Esophagus muscularis mucosa (tissue), 4 donors: ENCODE measurements at regions of chr12 and their contacts with region 1.

Region 1: GRCh38 chr12:56758728-56759262 is 4.3 kb upstream of the HSD17B6 start:
- DNase-seq: no peak
- H3K4me3 ChIP-seq: no peak overlapping the region
- H3K27ac ChIP-seq: no peak overlapping the region
- H3K4me1 ChIP-seq: peaks cover 0 to 2% (median 0%) of the 10 kb centered on the region in 4 donors
- H3K27me3 ChIP-seq: no peaks in the 10 kb centered on the region
- CTCF ChIP-seq: no peak
- EP300 ChIP-seq: no peak
- POLR2A ChIP-seq: no peak

Region 2: DNA sequence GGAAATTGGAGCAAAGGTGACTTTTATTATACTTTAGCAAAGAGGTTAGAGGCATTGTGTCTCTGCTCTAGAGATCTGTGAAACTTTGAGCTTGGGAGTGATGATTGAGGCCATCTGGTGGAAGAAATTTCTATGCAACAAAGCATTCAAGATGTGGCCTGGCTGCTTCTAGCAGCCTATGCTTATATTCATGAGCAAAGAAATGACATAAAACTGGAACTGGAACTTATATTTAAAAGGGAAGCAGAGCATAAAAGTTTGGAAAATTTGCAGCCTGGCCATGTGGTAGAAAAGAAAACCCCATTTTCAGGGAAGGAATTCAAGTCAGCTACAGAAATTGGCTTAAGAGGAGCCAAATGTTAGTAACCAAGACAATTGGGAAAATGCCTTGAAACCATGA is 105.0 kb after region 1 on chr12:
- intact Hi-C with region 1: no loop called
- DNase-seq: no peak
- H3K4me3 ChIP-seq: no peak overlapping the region
- H3K27ac ChIP-seq: no peak overlapping the region
- H3K4me1 ChIP-seq: no peaks in the 10 kb centered on the region
- H3K27me3 ChIP-seq: peaks cover 0 to 6% (median 0%) of the 10 kb centered on the region in 4 donors
- CTCF ChIP-seq: no peak
- EP300 ChIP-seq: no peak
- POLR2A ChIP-seq: no peak

Region 3: DNA sequence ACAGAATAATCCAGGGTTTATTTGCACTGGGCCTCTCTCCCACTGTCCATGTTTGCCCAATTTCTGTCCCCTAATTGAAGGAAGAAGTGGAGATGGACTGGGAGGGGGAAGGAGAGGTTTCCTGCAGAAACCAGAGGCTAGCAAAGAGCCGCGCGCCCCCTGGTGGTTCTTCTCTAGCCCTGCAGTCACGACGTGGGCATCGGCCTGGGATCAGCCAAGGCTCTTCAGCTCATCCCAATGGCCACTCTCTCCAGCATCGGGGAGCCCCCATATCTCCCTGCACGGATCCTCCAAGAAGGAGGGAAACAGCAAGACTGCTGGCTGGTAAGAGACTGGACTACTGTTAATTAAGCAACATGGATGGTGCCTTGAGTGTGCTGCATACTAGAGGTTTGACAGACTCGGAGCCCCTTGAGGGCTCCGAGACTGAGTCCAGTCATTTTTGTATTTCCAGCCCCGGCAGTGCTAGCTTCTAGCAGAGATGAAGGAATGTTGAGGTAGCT is 228.8 kb after region 1 on chr12:
- intact Hi-C with region 1: loop called (anchors 1 kb)
- DNase-seq: peak; percentile 94
- H3K4me3 ChIP-seq: no peak overlapping the region
- H3K27ac ChIP-seq: no peak overlapping the region
- H3K4me1 ChIP-seq: peaks cover 8 to 21% (median 12%) of the 10 kb centered on the region in 4 donors
- H3K27me3 ChIP-seq: no peaks in the 10 kb centered on the region
- CTCF ChIP-seq: peak; percentile 94 to 97 (median 95)
- EP300 ChIP-seq: no peak
- POLR2A ChIP-seq: no peak

Region 4: GRCh38 chr12:57069523-57069922 is 310.7 kb after region 1 on chr12:
- intact Hi-C with region 1: no loop called
- DNase-seq: no peak
- H3K4me3 ChIP-seq: no peak overlapping the region
- H3K27ac ChIP-seq: peak overlapping the region; percentile 75 to 82 (median 78)
- H3K4me1 ChIP-seq: peaks cover 0 to 31% (median 28%) of the 10 kb centered on the region in 4 donors
- H3K27me3 ChIP-seq: no peaks in the 10 kb centered on the region
- CTCF ChIP-seq: peak; percentile 93 to 96 (median 93)
- EP300 ChIP-seq: no peak
- POLR2A ChIP-seq: no peak